WTC11 (cell line): ENCODE measurements at regions of chr3 and their contacts with region 1.

Region 1: GRCh38 chr3:188769831-188770230 is 401.9 kb upstream of the TPRG1 start:
- DNase-seq: no peak
- ATAC-seq: no peak
- H3K4me3 Mint-ChIP-seq: no peak overlapping the region
- H3K27ac Mint-ChIP-seq: no peak overlapping the region; the same call in 1 of the 2 replicates
- H3K4me1 Mint-ChIP-seq: peaks cover 4% of the 10 kb centered on the region
- H3K27me3 Mint-ChIP-seq: no peaks in the 10 kb centered on the region
- CTCF ChIP-seq: no peak

Region 2: DNA sequence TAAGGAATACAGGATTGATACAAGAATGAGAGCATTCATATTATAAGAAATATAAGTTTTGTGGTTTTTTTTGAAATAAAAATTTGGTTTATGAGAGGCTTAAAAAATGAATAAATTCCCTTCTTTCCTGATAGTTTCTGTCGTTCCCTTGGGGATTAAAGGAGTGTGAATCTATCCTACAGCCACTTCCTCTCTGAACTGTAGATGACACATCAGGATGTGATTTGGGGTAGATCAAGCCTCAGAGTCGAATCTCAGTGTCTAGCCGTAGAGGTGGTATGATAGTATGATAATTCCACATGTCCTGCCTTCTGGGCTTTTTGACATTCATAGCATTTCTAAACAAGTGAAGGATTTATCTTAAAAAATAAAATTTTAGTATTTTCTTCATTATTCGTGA is 272.8 kb before region 1 on chr3:
- CTCF ChIA-PET with region 1: no interaction called
- POLR2A ChIA-PET with region 1: no interaction called
- DNase-seq: no peak
- ATAC-seq: no peak
- H3K4me3 Mint-ChIP-seq: no peak overlapping the region
- H3K27ac Mint-ChIP-seq: no peak overlapping the region
- H3K4me1 Mint-ChIP-seq: no peaks in the 10 kb centered on the region
- H3K27me3 Mint-ChIP-seq: no peaks in the 10 kb centered on the region
- CTCF ChIP-seq: no peak

Region 3: DNA sequence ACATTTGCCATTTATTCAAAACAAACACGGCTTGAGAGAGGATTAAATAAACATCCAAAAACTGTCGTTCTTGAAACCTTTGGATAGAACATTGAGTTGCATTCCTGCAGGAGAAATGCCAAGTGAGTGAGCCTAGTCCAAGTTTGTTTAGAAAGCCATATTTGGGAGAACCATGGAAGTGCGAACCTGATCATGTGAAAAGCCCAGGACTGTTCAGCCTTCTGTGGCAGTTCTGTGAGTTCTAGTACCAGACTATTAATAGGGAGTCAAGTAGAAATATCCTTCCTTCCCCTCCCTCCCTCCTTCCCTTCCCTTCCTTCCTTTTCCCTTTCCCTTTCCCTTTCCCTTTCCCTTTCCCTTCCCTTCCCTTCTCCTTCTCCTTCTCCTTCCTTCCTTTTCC is 145.4 kb before region 1 on chr3:
- CTCF ChIA-PET with region 1: no interaction called
- POLR2A ChIA-PET with region 1: no interaction called
- DNase-seq: no peak
- ATAC-seq: no peak
- H3K4me3 Mint-ChIP-seq: no peak overlapping the region
- H3K27ac Mint-ChIP-seq: no peak overlapping the region
- H3K4me1 Mint-ChIP-seq: no peaks in the 10 kb centered on the region
- H3K27me3 Mint-ChIP-seq: no peaks in the 10 kb centered on the region
- CTCF ChIP-seq: no peak

Region 4: DNA sequence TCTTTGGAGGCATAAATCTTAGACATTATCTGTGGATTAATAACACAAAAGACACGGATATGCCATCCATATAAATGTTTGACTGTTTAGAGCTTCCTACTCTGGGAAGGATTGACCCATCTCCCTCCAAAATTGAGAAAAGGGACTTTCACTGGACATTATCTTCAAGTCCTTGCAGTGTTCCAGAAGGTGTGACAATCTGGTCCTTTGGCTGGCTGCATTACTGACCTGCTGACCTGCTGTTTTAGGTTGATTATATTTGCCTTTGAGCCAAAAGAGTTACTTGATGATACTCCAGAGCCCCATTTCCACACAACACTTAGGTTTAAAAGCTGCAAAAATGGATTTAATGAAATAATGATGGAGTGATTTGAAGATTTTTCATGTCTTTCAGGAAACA is 111.2 kb before region 1 on chr3:
- CTCF ChIA-PET with region 1: no interaction called
- POLR2A ChIA-PET with region 1: interaction called, 12 read pairs
- DNase-seq: no peak
- ATAC-seq: no peak
- H3K4me3 Mint-ChIP-seq: no peak overlapping the region
- H3K27ac Mint-ChIP-seq: no peak overlapping the region
- H3K4me1 Mint-ChIP-seq: peaks cover 19% of the 10 kb centered on the region
- H3K27me3 Mint-ChIP-seq: no peaks in the 10 kb centered on the region
- CTCF ChIP-seq: no peak